GM12878 (cell line): ENCODE measurements at regions of chr3 and their contacts with region 1.

Region 1: DNA sequence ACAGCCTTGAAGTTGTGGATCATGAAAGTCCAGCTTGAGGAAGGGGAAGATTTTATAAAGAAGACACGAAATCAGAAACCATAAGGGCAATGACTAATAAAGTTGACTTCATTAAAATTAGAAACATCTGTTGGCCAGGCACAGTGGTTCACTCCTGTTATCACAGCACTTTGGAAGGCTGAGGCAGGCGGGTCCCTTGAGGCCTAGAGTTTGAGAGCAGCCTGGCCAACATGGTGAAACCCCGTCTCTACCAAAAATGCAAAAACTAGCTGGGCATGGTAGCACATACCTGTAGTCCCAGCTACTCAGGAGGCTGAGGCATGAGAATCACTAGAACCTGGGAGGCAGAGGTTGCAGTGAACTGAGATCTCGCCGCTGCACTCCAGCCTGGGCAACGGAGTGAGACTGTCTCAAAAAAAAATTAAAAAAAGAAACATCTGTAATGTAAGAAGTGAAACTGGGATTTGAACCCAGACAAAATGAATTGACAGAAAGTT is 7.9 kb upstream of the UBXN7 start:
- DNase-seq: peak; percentile 67
- ATAC-seq: peak; percentile 79
- H3K4me3 ChIP-seq: no peak overlapping the region
- H3K27ac ChIP-seq: peak overlapping the region; percentile 95
- H3K4me1 ChIP-seq: peaks cover 34% of the 10 kb centered on the region
- H3K27me3 ChIP-seq: no peaks in the 10 kb centered on the region
- CTCF ChIP-seq: no peak
- EP300 ChIP-seq: no peak
- POLR2A ChIP-seq: no peak
- RAD21 ChIP-seq: no peak

Region 2: DNA sequence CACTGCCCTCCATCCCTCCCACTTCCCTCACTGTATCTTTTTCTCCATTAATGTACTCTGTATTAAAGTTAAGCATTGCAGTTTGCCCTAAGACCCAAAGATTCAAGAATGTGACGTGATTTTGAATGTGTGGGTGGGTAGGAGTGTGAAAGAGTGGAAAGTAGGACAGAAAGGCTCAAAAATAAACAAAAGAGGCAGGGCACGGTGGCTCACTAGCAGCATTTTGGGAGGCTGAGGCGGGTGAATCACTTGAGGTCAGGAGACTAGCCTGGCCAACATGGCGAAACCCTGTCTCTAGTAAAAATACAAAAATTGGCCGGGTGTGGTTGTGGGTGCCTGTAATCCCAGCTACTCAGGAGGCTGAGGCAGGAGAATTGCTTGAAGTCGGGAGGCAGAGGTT is 376.6 kb before region 1 on chr3:
- CTCF ChIA-PET with region 1: no interaction called
- POLR2A ChIA-PET with region 1: no interaction called
- RAD21 ChIA-PET with region 1: no interaction called
- SMC1A ChIA-PET with region 1: no interaction called
- in situ Hi-C with region 1: no loop called
- intact Hi-C with region 1: no loop called
- DNase-seq: no peak
- ATAC-seq: no peak; the same call in 2 of the 3 replicates
- H3K4me3 ChIP-seq: no peak overlapping the region
- H3K27ac ChIP-seq: no peak overlapping the region
- H3K4me1 ChIP-seq: no peaks in the 10 kb centered on the region
- H3K27me3 ChIP-seq: no peaks in the 10 kb centered on the region
- CTCF ChIP-seq: no peak
- EP300 ChIP-seq: no peak
- POLR2A ChIP-seq: no peak
- RAD21 ChIP-seq: no peak

Region 3: GRCh38 chr3:196454935-196455334 is 14.8 kb after region 1 on chr3:
- CTCF ChIA-PET with region 1: interaction called, 12 read pairs
- POLR2A ChIA-PET with region 1: interaction called, 9 read pairs
- RAD21 ChIA-PET with region 1: interaction called, 60 read pairs
- SMC1A ChIA-PET with region 1: interaction called, 59 read pairs
- in situ Hi-C with region 1: no loop called
- intact Hi-C with region 1: loop called (anchors 1 kb)
- DNase-seq: no peak
- ATAC-seq: peak; percentile 35; the same call in 1 of the 3 replicates
- H3K4me3 ChIP-seq: no peak overlapping the region
- H3K27ac ChIP-seq: no peak overlapping the region
- H3K4me1 ChIP-seq: peaks cover 4% of the 10 kb centered on the region
- H3K27me3 ChIP-seq: no peaks in the 10 kb centered on the region
- CTCF ChIP-seq: no peak
- EP300 ChIP-seq: no peak
- POLR2A ChIP-seq: no peak
- RAD21 ChIP-seq: no peak

Region 4: GRCh38 chr3:196463804-196464203 is 23.7 kb after region 1 on chr3:
- CTCF ChIA-PET with region 1: interaction called, 12 read pairs
- POLR2A ChIA-PET with region 1: interaction called, 8 read pairs
- RAD21 ChIA-PET with region 1: interaction called, 60 read pairs
- SMC1A ChIA-PET with region 1: interaction called, 59 read pairs
- in situ Hi-C with region 1: no loop called
- intact Hi-C with region 1: loop called (anchors 1 kb)
- DNase-seq: no peak
- ATAC-seq: no peak; the same call in 2 of the 3 replicates
- H3K4me3 ChIP-seq: no peak overlapping the region
- H3K27ac ChIP-seq: peak overlapping the region; percentile 95
- H3K4me1 ChIP-seq: peaks cover 6% of the 10 kb centered on the region
- H3K27me3 ChIP-seq: no peaks in the 10 kb centered on the region
- CTCF ChIP-seq: no peak
- EP300 ChIP-seq: no peak
- POLR2A ChIP-seq: no peak
- RAD21 ChIP-seq: no peak

Region 5: GRCh38 chr3:196757876-196758739 is 318.0 kb after region 1 on chr3:
- CTCF ChIA-PET with region 1: no interaction called
- POLR2A ChIA-PET with region 1: no interaction called
- RAD21 ChIA-PET with region 1: no interaction called
- SMC1A ChIA-PET with region 1: no interaction called
- in situ Hi-C with region 1: no loop called
- intact Hi-C with region 1: no loop called
- DNase-seq: no peak
- ATAC-seq: peak; percentile 63
- H3K4me3 ChIP-seq: no peak overlapping the region
- H3K27ac ChIP-seq: no peak overlapping the region
- H3K4me1 ChIP-seq: no peaks in the 10 kb centered on the region
- H3K27me3 ChIP-seq: no peaks in the 10 kb centered on the region
- CTCF ChIP-seq: no peak
- EP300 ChIP-seq: no peak
- POLR2A ChIP-seq: no peak
- RAD21 ChIP-seq: no peak